ENCODE measurements at regions of chr10 and their contacts with region 1.

Region 1: GRCh38 chr10:24724381-24725228 is 918 bp upstream of the ARHGAP21 start:
- DNase-seq: peak; percentile 97 to 98
- ATAC-seq: peak; percentile 92 to 96 (median 96)
- H3K4me3 ChIP-seq: peak overlapping the region; percentile 70 to 94 (median 86)
- H3K27ac ChIP-seq: peak overlapping the region; percentile 96 to 99 (median 98)
- H3K4me1 ChIP-seq: peaks cover 0 to 35% (median 25%) of the 10 kb centered on the region in 9 donors
- H3K27me3 ChIP-seq: no peaks in the 10 kb centered on the region
- CTCF ChIP-seq: no peak

Region 2: GRCh38 chr10:24456322-24456721 is 268.3 kb before region 1 on chr10:
- intact Hi-C with region 1: no loop called
- DNase-seq: no peak
- ATAC-seq: peak in 6 of 8 donors; percentile 22 to 87 (median 34)
- H3K4me3 ChIP-seq: no peak overlapping the region
- H3K27ac ChIP-seq: peak overlapping the region in 2 of 10 donors; percentile 23 to 68
- H3K4me1 ChIP-seq: peaks cover 0 to 65% (median 38%) of the 10 kb centered on the region in 9 donors
- H3K27me3 ChIP-seq: no peaks in the 10 kb centered on the region
- CTCF ChIP-seq: no peak

Region 3: GRCh38 chr10:24680647-24681524 is 43.7 kb before region 1 on chr10:
- intact Hi-C with region 1: no loop called
- DNase-seq: no peak
- ATAC-seq: peak in 2 of 8 donors; percentile 33 to 52
- H3K4me3 ChIP-seq: no peak overlapping the region
- H3K27ac ChIP-seq: peak overlapping the region in 3 of 10 donors; percentile 3 to 37 (median 34)
- H3K4me1 ChIP-seq: peaks cover 0 to 50% (median 30%) of the 10 kb centered on the region in 9 donors
- H3K27me3 ChIP-seq: no peaks in the 10 kb centered on the region
- CTCF ChIP-seq: no peak

Region 4: DNA sequence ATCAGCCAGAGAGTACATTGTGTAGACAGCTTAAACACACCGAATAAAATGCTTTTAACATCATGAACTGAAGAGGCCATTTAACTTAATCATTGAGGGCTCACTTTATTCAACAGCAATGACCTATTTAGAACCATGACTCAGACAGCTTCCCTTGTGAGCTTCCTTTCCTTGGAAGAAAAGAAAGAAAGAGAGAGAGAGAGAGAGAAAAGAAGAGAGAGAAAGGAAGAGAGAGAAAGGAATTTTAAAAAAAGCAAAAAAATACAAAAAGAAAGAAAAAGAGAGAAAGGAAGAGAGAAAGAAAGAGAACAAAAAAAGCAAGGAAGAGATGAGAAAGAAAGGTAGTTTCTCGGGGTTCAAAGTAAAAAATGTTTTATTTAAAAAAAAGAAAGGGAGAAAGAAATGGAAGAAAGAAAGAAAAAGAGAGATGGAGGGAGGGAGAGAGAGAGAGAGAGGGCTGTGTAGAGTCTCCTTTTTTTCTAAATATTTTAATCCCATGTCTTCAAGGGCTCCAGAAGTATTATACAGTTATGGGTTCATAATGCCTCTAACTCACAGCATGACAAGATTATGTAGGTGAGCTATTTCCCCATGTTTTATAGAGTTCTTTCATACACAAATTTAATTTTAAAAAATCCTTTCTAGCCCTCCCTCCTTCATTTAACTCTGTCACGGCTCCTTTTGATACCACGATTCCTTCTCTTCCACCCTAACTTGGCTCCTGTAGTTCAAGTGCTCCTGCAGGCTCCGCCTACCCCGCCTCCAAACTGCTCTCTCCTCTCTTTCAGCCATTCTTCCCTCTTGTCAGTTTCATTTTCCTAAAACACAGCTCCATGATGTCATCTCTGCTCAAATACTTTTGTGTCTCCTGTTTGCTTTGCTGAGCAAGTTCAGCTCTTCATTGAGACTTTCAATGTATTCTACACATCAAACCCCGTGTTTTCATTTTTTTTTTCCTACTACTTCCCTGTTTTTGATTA is 142.3 kb after region 1 on chr10:
- intact Hi-C with region 1: loop called in 2 of 10 experiments (anchors 10 kb)
- DNase-seq: peak; percentile 52 to 58
- ATAC-seq: peak in 7 of 8 donors; percentile 87 to 95 (median 90)
- H3K4me3 ChIP-seq: peak overlapping the region in 5 of 10 donors; percentile 5 to 23 (median 18)
- H3K27ac ChIP-seq: peak overlapping the region in 9 of 10 donors; percentile 12 to 85 (median 61)
- H3K4me1 ChIP-seq: peaks cover 0 to 35% (median 0%) of the 10 kb centered on the region in 9 donors
- H3K27me3 ChIP-seq: no peaks in the 10 kb centered on the region
- CTCF ChIP-seq: no peak

Region 5: GRCh38 chr10:24952707-24953645 is 228.4 kb after region 1 on chr10:
- intact Hi-C with region 1: loop called in 6 of 10 experiments (anchors 5 to 10 kb)
- DNase-seq: peak; percentile 54 to 65
- ATAC-seq: peak; percentile 41 to 79 (median 64)
- H3K4me3 ChIP-seq: peak overlapping the region; percentile 51 to 73 (median 64)
- H3K27ac ChIP-seq: peak overlapping the region; percentile 55 to 92 (median 86)
- H3K4me1 ChIP-seq: peaks cover 0 to 30% (median 13%) of the 10 kb centered on the region in 9 donors
- H3K27me3 ChIP-seq: peaks cover 0 to 6% (median 0%) of the 10 kb centered on the region in 7 donors
- CTCF ChIP-seq: peak in 8 of 9 donors; percentile 19 to 57 (median 44)

Region 6: DNA sequence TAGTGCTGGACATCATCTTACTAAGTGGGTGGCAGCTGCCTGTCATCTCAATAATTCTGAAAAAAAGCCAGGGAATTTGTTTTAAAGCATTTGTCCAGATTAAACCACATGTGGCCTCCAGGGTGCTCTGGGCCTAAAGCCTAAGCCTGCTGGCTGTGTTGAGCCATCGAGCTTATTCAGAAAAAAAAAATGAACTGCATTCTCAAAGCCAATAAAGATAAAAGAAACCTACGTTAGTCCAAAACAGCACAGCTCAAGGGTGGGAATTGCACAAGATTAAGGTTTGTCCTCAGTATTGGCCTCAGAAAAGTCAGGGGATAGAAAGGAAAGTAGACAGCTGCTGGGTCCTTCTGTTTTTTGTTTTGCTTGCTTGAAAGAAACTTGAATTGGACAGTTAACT is 250.4 kb after region 1 on chr10:
- intact Hi-C with region 1: loop called in 5 of 10 experiments (anchors 5 to 10 kb)
- DNase-seq: peak; percentile 38 to 48
- ATAC-seq: peak; percentile 80 to 92 (median 86)
- H3K4me3 ChIP-seq: no peak overlapping the region
- H3K27ac ChIP-seq: peak overlapping the region in 9 of 10 donors; percentile 38 to 74 (median 53)
- H3K4me1 ChIP-seq: peaks cover 0 to 39% (median 0%) of the 10 kb centered on the region in 9 donors
- H3K27me3 ChIP-seq: no peaks in the 10 kb centered on the region
- CTCF ChIP-seq: peak in 6 of 9 donors; percentile 5 to 20 (median 16)

Region 7: GRCh38 chr10:25016376-25017154 is 292.0 kb after region 1 on chr10 and contains the start of gene THNSL1:
- intact Hi-C with region 1: loop called in 6 of 10 experiments (anchors 1 to 10 kb)
- DNase-seq: peak; percentile 99
- ATAC-seq: peak; percentile 99 to 100 (median 99)
- H3K4me3 ChIP-seq: peak within 1 kb of the TSS; percentile 61 to 83 (median 70)
- H3K27ac ChIP-seq: peak within 1 kb of the TSS; percentile 75 to 95 (median 92)
- H3K4me1 ChIP-seq: peaks cover 0 to 18% (median 13%) of the 10 kb centered on the region in 9 donors
- H3K27me3 ChIP-seq: no peaks in the 10 kb centered on the region
- CTCF ChIP-seq: no peak
- total RNA-seq, gene THNSL1: 4.0 to 6.8 (median 5.1) TPM